IMR-90 (cell line): ENCODE measurements at regions of chr16 and their contacts with region 1.

Region 1: DNA sequence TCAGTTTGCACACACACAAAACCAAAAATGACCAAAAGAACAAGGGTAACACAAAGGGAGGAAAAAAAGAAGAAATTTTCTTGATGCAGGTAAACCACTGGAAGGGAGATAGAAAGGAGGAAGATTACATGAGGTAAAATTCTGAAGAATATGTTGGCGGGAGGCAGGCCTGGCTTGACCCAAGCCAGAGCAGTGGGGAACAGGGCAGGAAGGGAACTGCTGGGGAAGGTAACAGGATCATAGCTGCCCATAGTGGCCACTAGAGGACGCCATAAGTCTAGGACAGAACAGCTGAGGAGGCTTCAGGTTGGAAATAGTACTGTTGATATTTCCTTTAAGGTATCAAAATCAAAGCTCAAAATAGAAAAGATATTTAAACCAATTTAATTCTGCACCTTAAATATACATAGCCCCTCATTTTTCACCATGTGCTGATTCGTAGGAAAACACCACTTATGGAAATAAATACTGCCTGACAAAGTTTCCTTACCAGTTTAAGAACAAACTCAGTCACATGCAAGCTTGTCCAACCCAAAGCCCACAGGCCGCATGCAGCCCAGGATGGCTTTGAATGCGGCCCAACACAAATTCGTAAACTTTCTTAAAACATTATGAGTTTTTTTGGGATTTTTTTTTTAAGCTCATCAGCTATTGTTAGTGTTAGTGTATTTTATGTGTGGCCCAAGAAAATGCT is 15.5 kb downstream of the VPS35 start:
- DNase-seq: peak; percentile 69
- ATAC-seq: peak; percentile 91
- H3K4me3 ChIP-seq: no peak overlapping the region
- H3K27ac ChIP-seq: no peak overlapping the region
- H3K4me1 ChIP-seq: 0 out of 2 replicates have a peak, but pooled peaks cover 2% of the 10 kb centered on the region
- H3K27me3 ChIP-seq: no peaks in the 10 kb centered on the region
- CTCF ChIP-seq: peak; percentile 95
- POLR2A ChIP-seq: peak; percentile 31; the same call in 1 of the 2 replicates
- RAD21 ChIP-seq: peak; percentile 94

Region 2: GRCh38 chr16:46801428-46802049 is 128.1 kb after region 1 on chr16:
- CTCF ChIA-PET with region 1: interaction called, 8 read pairs
- POLR2A ChIA-PET with region 1: no interaction called
- dilution Hi-C with region 1: no loop called
- in situ Hi-C with region 1: no loop called
- intact Hi-C with region 1: loop called (anchors 1 kb)
- DNase-seq: peak; percentile 25
- ATAC-seq: peak; percentile 80
- H3K4me3 ChIP-seq: no peak overlapping the region
- H3K27ac ChIP-seq: no peak overlapping the region; the same call in 1 of the 2 replicates
- H3K4me1 ChIP-seq: no peaks in the 10 kb centered on the region
- H3K27me3 ChIP-seq: no peaks in the 10 kb centered on the region
- CTCF ChIP-seq: peak; percentile 50
- POLR2A ChIP-seq: no peak
- RAD21 ChIP-seq: peak; percentile 40; the same call in 1 of the 2 replicates

Region 3: DNA sequence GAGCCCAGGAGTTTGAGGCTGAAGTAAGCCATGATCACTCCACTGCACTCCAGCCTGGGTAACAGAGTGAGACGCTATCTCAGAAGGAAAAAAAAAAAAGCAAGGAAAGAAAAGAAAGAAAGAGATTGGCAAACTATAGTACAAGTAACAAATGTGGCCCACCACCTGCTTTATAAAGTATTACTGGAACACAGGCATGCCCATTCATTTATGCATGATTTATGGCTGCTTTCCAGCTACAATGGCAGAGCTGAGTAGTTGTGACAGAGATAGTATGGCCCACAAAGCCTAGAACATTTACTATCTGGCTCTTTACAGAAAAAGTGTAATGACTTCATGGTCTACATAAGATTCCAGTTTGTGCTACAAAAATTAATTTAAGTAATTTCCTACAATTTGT is 133.9 kb after region 1 on chr16:
- CTCF ChIA-PET with region 1: interaction called, 10 read pairs
- POLR2A ChIA-PET with region 1: no interaction called
- dilution Hi-C with region 1: no loop called
- in situ Hi-C with region 1: no loop called
- intact Hi-C with region 1: no loop called
- DNase-seq: no peak
- ATAC-seq: no peak
- H3K4me3 ChIP-seq: no peak overlapping the region
- H3K27ac ChIP-seq: no peak overlapping the region
- H3K4me1 ChIP-seq: peaks cover 3% of the 10 kb centered on the region; the same call in 1 of the 2 replicates
- H3K27me3 ChIP-seq: no peaks in the 10 kb centered on the region
- CTCF ChIP-seq: no peak
- POLR2A ChIP-seq: no peak
- RAD21 ChIP-seq: no peak

Region 4: DNA sequence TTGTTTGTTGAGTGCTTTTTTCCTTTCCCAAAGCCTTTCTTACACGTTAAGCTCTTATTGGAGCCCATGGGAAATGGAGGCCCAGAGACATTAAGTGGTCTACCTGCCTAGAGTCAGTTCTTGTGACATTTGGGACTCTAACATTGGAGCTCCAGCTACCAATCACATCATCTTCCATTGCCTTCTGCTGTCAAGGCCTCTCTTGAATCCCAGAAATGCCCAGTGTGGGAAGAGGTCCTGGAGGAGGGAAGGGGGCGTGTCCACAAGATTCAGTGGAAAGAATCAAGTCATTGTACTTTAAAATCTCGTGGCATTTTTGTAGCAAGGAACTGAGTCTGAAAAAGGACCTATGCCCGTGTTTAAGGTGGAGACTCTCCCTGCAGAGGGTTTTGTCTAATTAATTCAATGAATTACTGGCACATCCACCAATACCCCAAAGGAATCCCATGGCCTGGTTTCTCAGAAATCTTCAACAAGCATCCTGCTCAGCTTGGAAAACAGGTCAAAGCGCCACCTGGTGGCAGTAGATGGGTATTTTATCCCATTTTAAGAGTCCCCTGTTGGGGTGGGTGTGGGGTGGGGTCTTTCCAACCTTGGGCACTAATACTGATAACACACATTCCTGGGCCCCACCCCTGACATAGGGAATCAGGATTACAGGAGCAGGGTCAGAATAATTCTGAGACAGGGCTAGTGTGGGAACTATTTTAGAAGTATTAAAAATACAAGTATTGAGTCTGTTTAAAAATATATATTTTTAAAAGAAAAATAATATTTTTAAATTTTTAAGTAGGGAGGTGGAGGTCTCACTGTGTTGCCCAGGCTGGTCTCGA is 235.3 kb after region 1 on chr16:
- CTCF ChIA-PET with region 1: interaction called, 3 read pairs
- POLR2A ChIA-PET with region 1: no interaction called
- dilution Hi-C with region 1: no loop called
- in situ Hi-C with region 1: no loop called
- intact Hi-C with region 1: loop called (anchors 1 kb)
- DNase-seq: peak; percentile 61
- ATAC-seq: peak; percentile 87
- H3K4me3 ChIP-seq: no peak overlapping the region
- H3K27ac ChIP-seq: no peak overlapping the region
- H3K4me1 ChIP-seq: no peaks in the 10 kb centered on the region
- H3K27me3 ChIP-seq: no peaks in the 10 kb centered on the region
- CTCF ChIP-seq: peak; percentile 66
- POLR2A ChIP-seq: no peak
- RAD21 ChIP-seq: peak; percentile 69

Region 5: DNA sequence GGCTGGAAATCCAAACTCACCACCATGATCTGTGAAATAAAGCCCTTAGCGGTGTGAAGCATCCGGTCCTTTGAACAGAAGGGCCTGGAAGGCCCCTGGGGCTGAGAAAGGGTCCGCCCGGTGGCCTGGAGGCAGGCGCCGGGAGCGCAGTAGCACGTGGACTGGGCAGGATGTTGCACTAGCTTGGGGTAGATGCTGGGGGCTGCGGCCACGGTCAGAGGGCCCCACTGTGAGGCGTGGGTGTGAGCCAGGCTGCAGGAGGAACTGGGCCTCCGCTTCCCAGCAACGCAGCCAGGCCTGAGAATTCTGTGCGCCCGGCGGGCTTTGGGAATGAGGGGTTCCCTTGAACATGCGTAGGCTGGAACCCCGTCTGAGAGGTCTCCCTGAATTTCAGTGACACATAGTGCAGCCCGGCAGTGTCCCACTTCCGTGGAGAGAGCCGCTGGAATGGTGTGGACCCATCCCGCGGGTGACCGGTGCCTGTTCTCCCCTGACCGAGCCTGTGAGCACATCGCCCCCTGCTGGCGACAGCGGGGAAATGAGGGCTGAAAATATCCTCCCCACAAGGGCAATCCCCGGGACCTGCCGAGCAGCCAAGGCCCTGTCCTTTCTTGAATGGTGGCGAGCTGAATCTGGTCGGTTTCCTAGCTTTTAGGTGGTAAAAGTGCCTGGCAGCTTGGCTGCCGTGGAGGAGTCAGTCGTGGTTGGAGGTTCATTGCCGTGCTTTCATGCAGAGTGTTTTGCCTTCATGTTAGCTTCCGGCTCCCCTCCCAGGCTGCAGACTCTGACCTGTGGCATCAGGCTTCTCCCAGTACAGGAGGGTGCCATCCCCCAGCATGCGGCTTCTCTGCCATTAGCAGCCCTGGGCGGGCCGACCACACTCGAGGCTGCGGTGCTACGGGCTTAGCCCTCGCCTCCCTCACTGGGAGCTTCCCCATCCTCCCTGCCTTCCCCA is 256.2 kb after region 1 on chr16:
- CTCF ChIA-PET with region 1: no interaction called
- POLR2A ChIA-PET with region 1: no interaction called
- dilution Hi-C with region 1: no loop called
- in situ Hi-C with region 1: loop called (anchors 10 kb)
- intact Hi-C with region 1: loop called (anchors 1 kb)
- DNase-seq: peak; percentile 45
- ATAC-seq: peak; percentile 98
- H3K4me3 ChIP-seq: no peak overlapping the region
- H3K27ac ChIP-seq: no peak overlapping the region
- H3K4me1 ChIP-seq: no peaks in the 10 kb centered on the region
- H3K27me3 ChIP-seq: no peaks in the 10 kb centered on the region
- CTCF ChIP-seq: peak; percentile 79
- POLR2A ChIP-seq: no peak
- RAD21 ChIP-seq: peak; percentile 65